Head of caudate nucleus (tissue), 42 donors: ENCODE measurements at regions of chr2 and their contacts with region 1.

Region 1: GRCh38 chr2:232315049-232315922 is 63.3 kb upstream of the ALPP start:
- DNase-seq: peak in 39 of 42 donors; percentile 25 to 85 (median 66)

Region 2: GRCh38 chr2:232126301-232127099 is 188.8 kb before region 1 on chr2:
- intact Hi-C with region 1: loop called (anchors 10 kb)
- DNase-seq: no peak